GM18951 (cell line): ENCODE measurements at regions of chr9 and their contacts with region 1.

Region 1: GRCh38 chr9:17462869-17463464 is 115.9 kb upstream of the SH3GL2 start:
- POLR2A ChIP-seq: no peak

Region 2: GRCh38 chr9:17134396-17135294 is 328.3 kb before region 1 on chr9 and contains the start of gene CNTLN:
- in situ Hi-C with region 1: loop called (anchors 25 kb)
- POLR2A ChIP-seq: peak; percentile 77